Right ventricle myocardium inferior (tissue), 1 donor: ENCODE measurements at regions of chr3 and their contacts with region 1.

Region 1: GRCh38 chr3:124117486-124117885 is 125.6 kb upstream of the ROPN1 start:
- DNase-seq: no peak
- ATAC-seq: peak; percentile 56

Region 2: DNA sequence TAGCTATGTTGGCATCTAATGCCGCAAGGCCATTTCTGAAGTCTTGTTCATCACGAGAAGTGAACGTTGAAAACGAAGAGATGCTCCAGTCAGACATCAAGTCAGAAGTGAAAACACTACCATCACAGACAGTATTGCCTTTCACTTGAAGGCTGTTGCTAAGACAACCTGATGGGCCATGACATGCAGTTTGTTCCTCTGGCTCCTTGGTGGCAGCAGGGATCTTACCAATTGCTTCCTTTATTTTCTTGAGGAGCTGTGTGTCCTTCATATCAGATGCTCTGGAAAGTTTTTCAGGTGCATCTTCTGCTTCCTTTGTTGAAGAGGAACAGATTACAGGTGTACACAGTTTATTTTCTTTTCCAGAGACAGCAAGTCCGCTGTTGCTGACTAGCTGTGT is 202.7 kb before region 1 on chr3:
- intact Hi-C with region 1: no loop called
- DNase-seq: no peak
- ATAC-seq: no peak

Region 3: GRCh38 chr3:123986427-123986826 is 131.1 kb before region 1 on chr3:
- intact Hi-C with region 1: no loop called
- DNase-seq: no peak
- ATAC-seq: no peak

Region 4: GRCh38 chr3:124246949-124247348 is 129.5 kb after region 1 on chr3:
- intact Hi-C with region 1: loop called (anchors 10 kb)
- DNase-seq: no peak
- ATAC-seq: no peak

Region 5: DNA sequence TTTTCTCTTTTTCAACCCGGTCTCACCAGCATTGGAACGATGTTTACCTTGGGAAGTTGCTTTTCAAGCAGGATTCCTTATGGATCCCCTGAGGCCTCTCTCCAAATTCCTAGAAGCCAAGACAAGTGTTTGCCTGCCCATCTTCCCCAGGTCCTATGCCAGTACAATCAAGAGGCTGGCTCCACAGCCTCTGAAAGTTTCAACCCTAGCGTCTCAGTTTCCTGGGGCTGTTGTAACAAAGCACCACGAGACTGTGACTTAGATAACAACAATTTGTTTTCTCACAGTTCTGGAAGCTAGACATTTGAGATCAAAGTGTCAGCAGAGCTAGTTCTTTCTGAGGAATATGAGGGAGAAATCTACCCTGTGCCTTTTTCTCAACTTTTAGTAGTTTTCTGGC is 265.6 kb after region 1 on chr3:
- intact Hi-C with region 1: no loop called
- DNase-seq: no peak
- ATAC-seq: no peak

Region 6: GRCh38 chr3:124722589-124722988 is 605.1 kb after region 1 on chr3:
- intact Hi-C with region 1: no loop called
- DNase-seq: no peak
- ATAC-seq: no peak